ENCODE measurements at regions of chr15 and their contacts with region 1.

Region 1: DNA sequence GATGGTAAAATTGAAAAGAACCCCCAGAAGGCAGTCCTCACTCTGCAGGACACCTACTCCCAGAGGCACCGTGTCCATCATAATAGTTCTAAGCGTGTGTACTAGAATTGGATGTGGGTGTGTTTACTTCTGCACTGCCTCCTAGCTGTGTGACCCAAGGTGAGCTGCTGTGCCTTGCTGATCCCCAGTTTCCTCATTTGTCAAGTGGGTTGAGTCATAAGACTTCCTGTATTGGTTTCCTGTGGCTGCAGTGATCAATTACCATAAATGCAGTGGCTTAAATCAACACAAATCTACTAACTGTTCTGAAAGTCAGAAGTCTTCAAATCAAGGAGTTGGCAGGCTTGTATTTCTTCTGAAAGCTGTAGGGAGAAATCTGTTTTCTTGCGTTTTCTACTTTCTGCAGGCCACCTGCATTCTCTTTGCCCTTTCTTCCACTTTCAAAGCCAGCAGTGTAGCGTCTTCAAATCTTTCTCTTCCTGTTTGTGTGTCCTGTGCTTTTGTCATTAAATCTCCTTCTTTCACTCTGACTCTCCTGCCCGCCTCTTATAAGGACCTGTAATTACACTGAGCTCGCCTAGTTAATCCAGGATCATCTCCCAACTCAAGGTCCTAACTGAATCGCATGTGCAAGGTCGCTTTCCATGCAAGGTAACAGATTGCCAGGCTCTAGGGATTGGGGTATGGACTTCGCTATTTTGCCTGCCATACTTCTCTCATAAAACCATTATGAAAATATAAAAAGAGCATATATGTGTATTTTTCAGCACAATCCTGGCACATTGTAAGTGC is 59.0 kb downstream of the RORA start:
- DNase-seq: no peak
- ATAC-seq: no peak
- H3K4me3 ChIP-seq: no peak overlapping the region
- H3K27ac ChIP-seq: no peak overlapping the region
- H3K4me1 ChIP-seq: peaks cover 32% of the 10 kb centered on the region
- H3K27me3 ChIP-seq: no peaks in the 10 kb centered on the region
- CTCF ChIP-seq: no peak

Region 2: DNA sequence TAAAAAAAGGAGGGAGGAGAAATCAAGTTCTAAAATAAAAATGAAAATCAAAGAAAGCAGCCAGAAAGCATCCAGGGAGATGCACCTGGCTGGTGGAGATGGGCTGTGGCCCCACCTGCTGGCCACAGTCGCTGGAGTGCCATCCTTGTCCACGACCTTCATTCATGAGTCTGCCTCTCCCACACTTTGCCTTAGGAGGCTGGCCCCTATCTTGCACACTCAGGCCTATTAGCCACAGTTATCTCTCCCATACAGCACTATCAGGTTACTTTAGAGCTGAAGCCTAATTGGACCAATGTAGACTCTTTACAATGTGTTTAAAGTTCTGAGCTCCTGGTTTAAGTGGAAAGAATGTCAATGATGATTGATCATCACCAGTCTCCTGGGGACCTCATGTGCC is 451.0 kb after region 1 on chr15:
- intact Hi-C with region 1: loop called in 1 of 2 experiments (anchors 10 kb)
- DNase-seq: peak; percentile 30 to 60
- ATAC-seq: peak; percentile 54 to 70 (median 68)
- H3K4me3 ChIP-seq: no peak overlapping the region
- H3K27ac ChIP-seq: no peak overlapping the region
- H3K4me1 ChIP-seq: peaks cover 13% of the 10 kb centered on the region
- H3K27me3 ChIP-seq: no peaks in the 10 kb centered on the region
- CTCF ChIP-seq: peak; percentile 60

Measured in psoas muscle (tissue), 8 donors.